ENCODE measurements at regions of chr3 and their contacts with region 1.

Region 1: GRCh38 chr3:182713743-182714517 is 79.4 kb upstream of the ATP11B start:
- DNase-seq: peak; percentile 51
- H3K4me3 ChIP-seq: no peak overlapping the region
- H3K27ac ChIP-seq: no peak overlapping the region
- H3K4me1 ChIP-seq: no peaks in the 10 kb centered on the region
- H3K27me3 ChIP-seq: no peaks in the 10 kb centered on the region
- CTCF ChIP-seq: peak; percentile 65 to 73

Region 2: GRCh38 chr3:182644800-182645433 is 69.0 kb before region 1 on chr3:
- CTCF ChIA-PET with region 1: no interaction called
- dilution Hi-C with region 1: no loop called
- in situ Hi-C with region 1: no loop called
- intact Hi-C with region 1: no loop called
- DNase-seq: peak; percentile 85
- H3K4me3 ChIP-seq: no peak overlapping the region
- H3K27ac ChIP-seq: peak overlapping the region; percentile 15
- H3K4me1 ChIP-seq: peaks cover 14% of the 10 kb centered on the region
- H3K27me3 ChIP-seq: no peaks in the 10 kb centered on the region
- CTCF ChIP-seq: no peak

Region 3: GRCh38 chr3:182692021-182692420 is 21.9 kb before region 1 on chr3:
- CTCF ChIA-PET with region 1: interaction called, 11 read pairs
- dilution Hi-C with region 1: no loop called
- in situ Hi-C with region 1: no loop called
- intact Hi-C with region 1: no loop called
- DNase-seq: no peak
- H3K4me3 ChIP-seq: no peak overlapping the region
- H3K27ac ChIP-seq: no peak overlapping the region
- H3K4me1 ChIP-seq: no peaks in the 10 kb centered on the region
- H3K27me3 ChIP-seq: no peaks in the 10 kb centered on the region
- CTCF ChIP-seq: no peak

Region 4: DNA sequence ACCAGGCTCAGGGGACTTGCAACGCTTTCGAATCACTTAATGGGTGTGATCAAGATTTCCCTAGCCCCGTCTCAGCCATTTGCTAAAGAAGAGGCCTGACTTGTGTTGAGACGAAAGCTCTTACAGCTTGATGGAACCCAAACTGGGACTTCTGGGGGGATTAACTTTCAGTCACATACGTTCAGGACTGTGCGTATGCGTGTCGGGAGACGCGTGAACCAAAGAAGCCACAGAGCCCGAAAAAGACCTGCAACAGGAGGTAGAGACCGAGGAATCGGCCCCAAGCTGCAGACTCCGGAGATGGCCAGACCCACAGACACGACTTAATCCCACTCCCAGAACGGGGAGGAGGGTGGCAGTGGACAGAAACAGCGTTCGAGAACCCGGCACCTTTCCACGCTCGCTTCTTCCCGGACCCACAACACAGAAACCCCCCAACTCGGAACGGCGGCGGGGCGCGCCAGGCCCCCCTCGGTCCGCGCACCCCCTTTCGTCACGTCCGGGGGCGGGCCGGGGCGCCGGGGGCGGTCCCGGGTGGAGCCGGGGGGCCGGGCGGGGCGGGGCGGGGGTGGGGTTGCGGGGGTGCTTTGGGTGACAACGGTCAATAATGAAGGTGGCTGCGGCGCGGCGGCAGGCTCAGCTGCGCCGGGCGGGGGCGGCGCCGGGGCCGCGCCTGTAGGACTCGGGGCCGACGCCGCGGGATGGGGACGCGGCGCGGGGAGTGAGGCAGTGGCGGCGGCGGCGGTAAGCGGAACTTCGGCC is 79.2 kb after region 1 on chr3 and contains the start of gene ATP11B:
- CTCF ChIA-PET with region 1: no interaction called
- dilution Hi-C with region 1: no loop called
- in situ Hi-C with region 1: no loop called
- intact Hi-C with region 1: loop called (anchors 1 kb)
- DNase-seq: peak; percentile 66
- H3K4me3 ChIP-seq: peak within 1 kb of the TSS; percentile 61 to 76 (median 67)
- H3K27ac ChIP-seq: peak within 1 kb of the TSS; percentile 81
- H3K4me1 ChIP-seq: peaks cover 13% of the 10 kb centered on the region
- H3K27me3 ChIP-seq: no peaks in the 10 kb centered on the region
- CTCF ChIP-seq: no peak
- total RNA-seq, gene ATP11B: 74.4 to 80.2 TPM

Region 5: GRCh38 chr3:182837855-182838454 is 124.0 kb after region 1 on chr3:
- CTCF ChIA-PET with region 1: no interaction called
- dilution Hi-C with region 1: no loop called
- in situ Hi-C with region 1: loop called (anchors 10 kb)
- intact Hi-C with region 1: loop called (anchors 1 kb)
- DNase-seq: peak; percentile 7
- H3K4me3 ChIP-seq: no peak overlapping the region
- H3K27ac ChIP-seq: no peak overlapping the region
- H3K4me1 ChIP-seq: no peaks in the 10 kb centered on the region
- H3K27me3 ChIP-seq: no peaks in the 10 kb centered on the region
- CTCF ChIP-seq: peak; percentile 29 to 46

Region 6: GRCh38 chr3:183099026-183099837 is 385.3 kb after region 1 on chr3 and contains the start of gene MCCC1:
- CTCF ChIA-PET with region 1: no interaction called
- dilution Hi-C with region 1: no loop called
- in situ Hi-C with region 1: no loop called
- intact Hi-C with region 1: loop called (anchors 10 kb)
- DNase-seq: peak; percentile 99
- H3K4me3 ChIP-seq: peak within 1 kb of the TSS; percentile 52 to 97 (median 94)
- H3K27ac ChIP-seq: peak within 1 kb of the TSS; percentile 76
- H3K4me1 ChIP-seq: peaks cover 22% of the 10 kb centered on the region
- H3K27me3 ChIP-seq: no peaks in the 10 kb centered on the region
- CTCF ChIP-seq: no peak
- total RNA-seq, gene MCCC1: 14.0 to 15.3 TPM

Region 7: DNA sequence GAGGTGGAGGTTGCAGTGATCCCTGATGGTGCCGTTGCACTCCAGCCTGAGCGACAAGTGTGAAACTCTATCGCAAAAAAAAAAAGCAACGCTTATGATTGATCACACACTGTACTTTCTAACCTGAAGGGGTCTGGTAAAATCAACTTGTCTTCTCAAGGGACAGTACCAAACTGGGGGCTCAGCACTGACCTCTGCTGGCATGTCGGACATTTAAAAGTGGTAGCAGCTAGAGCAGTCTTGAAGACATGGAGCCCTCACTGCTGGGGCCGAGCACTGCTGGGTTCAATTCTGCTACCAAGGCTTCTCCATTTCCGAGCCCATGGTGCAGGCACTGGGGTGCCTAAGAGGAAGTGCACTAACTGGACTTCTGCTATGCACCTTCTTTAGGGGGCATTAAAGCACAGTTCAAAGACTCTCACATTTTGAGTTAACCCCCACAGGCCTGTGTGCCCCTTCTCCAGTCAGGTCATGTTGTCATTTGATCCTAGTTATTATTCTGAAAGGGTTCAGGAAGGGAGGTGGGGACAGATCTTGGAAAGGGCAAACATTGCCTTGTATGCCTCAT is 475.0 kb after region 1 on chr3:
- CTCF ChIA-PET with region 1: no interaction called
- dilution Hi-C with region 1: no loop called
- in situ Hi-C with region 1: no loop called
- intact Hi-C with region 1: loop called (anchors 5 kb)
- DNase-seq: no peak
- H3K4me3 ChIP-seq: no peak overlapping the region
- H3K27ac ChIP-seq: no peak overlapping the region
- H3K4me1 ChIP-seq: peaks cover 13% of the 10 kb centered on the region
- H3K27me3 ChIP-seq: no peaks in the 10 kb centered on the region
- CTCF ChIP-seq: peak; percentile 13 to 32

Measured in mammary epithelial cell (primary cell).